CD8-positive, alpha-beta memory T cell (primary cell): ENCODE measurements at regions of chr2 and their contacts with region 1.

Region 1: GRCh38 chr2:156400706-156401678 is 35.2 kb upstream of the GPD2 start:
- DNase-seq: peak; percentile 64 to 87 (median 83)
- H3K4me3 ChIP-seq: peak overlapping the region; percentile 84
- H3K4me3 Mint-ChIP-seq: peak overlapping the region; percentile 85 to 99 (median 93)
- H3K27ac ChIP-seq: peak overlapping the region; percentile 89
- H3K27ac Mint-ChIP-seq: peak overlapping the region; percentile 92 to 99 (median 97)
- H3K4me1 ChIP-seq: peaks cover 6% of the 10 kb centered on the region
- H3K4me1 Mint-ChIP-seq: peaks cover 19 to 31% (median 31%) of the 10 kb centered on the region in 3 donors
- H3K27me3 ChIP-seq: no peaks in the 10 kb centered on the region
- H3K27me3 Mint-ChIP-seq: peaks cover 0 to 14% of the 10 kb centered on the region in 2 donors

Region 2: GRCh38 chr2:156332534-156333273 is 68.3 kb before region 1 on chr2 and contains the start of gene NR4A2:
- CTCF ChIA-PET with region 1: interaction called, 27 read pairs
- POLR2A ChIA-PET with region 1: interaction called, 32 read pairs
- DNase-seq: peak; percentile 86 to 96 (median 93)
- H3K4me3 ChIP-seq: peak within 1 kb of the TSS; percentile 99
- H3K4me3 Mint-ChIP-seq: peak within 1 kb of the TSS; percentile 94 to 99 (median 97)
- H3K27ac ChIP-seq: peak within 1 kb of the TSS; percentile 94
- H3K27ac Mint-ChIP-seq: peak within 1 kb of the TSS; percentile 98 to 100 (median 99)
- H3K4me1 ChIP-seq: peaks cover 22% of the 10 kb centered on the region
- H3K4me1 Mint-ChIP-seq: peaks cover 25 to 65% (median 36%) of the 10 kb centered on the region in 3 donors
- H3K27me3 ChIP-seq: no peaks in the 10 kb centered on the region
- H3K27me3 Mint-ChIP-seq: peaks cover 4 to 46% of the 10 kb centered on the region in 2 donors
- total RNA-seq, gene NR4A2: 19.7 to 21.9 TPM

Region 3: DNA sequence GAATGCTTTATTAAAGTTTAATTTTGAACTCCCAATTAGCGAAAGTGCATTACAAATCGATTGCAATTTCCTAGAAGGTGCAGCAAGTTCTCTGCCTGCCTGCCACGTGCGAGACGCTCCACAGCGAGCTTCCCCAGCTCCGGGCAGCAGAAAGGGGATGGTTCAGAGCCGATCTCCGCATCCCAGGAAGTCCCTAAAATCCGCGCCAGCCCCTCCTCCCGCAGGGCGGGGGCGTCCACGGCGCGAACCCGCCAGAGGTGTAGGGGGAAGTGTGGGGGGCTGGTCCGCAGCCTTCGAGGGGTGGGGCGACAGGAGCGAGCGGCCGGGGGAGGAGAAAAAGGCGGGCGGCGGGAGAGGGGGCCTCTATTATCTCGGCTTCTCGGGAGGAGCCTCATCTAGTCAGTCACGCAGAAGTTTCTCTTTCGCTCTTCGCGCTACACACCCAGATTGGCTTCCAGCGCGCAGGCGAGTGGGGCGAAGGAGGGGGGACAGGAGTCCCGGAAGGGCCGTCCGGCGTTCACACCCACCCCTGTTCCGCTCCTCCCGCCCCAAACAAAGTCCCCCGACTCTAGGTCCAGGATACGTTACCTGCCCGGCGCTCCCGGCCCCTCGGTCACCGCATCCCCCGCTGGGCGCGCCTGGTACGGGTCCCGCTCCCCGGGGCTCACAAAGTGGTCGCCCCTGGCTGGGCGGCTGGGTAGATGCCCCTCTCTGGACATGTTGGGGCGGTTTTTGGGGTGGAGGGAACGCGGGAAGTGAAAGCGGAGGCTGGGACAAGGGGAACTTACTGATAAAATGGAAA is 59.3 kb before region 1 on chr2:
- CTCF ChIA-PET with region 1: interaction called, 27 read pairs
- POLR2A ChIA-PET with region 1: interaction called, 49 read pairs
- DNase-seq: peak; percentile 84 to 93 (median 87)
- H3K4me3 ChIP-seq: peak overlapping the region; percentile 86
- H3K4me3 Mint-ChIP-seq: peak overlapping the region; percentile 92 to 97 (median 94)
- H3K27ac ChIP-seq: peak overlapping the region; percentile 99
- H3K27ac Mint-ChIP-seq: peak overlapping the region; percentile 95 to 100 (median 99)
- H3K4me1 ChIP-seq: peaks cover 23% of the 10 kb centered on the region
- H3K4me1 Mint-ChIP-seq: peaks cover 31 to 55% (median 45%) of the 10 kb centered on the region in 3 donors
- H3K27me3 ChIP-seq: no peaks in the 10 kb centered on the region
- H3K27me3 Mint-ChIP-seq: peaks cover 0 to 5% of the 10 kb centered on the region in 2 donors

Region 4: GRCh38 chr2:156411835-156412234 is 10.8 kb after region 1 on chr2:
- CTCF ChIA-PET with region 1: no interaction called
- POLR2A ChIA-PET with region 1: no interaction called
- DNase-seq: no peak
- H3K4me3 ChIP-seq: no peak overlapping the region
- H3K4me3 Mint-ChIP-seq: no peak overlapping the region
- H3K27ac ChIP-seq: no peak overlapping the region
- H3K27ac Mint-ChIP-seq: no peak overlapping the region
- H3K4me1 ChIP-seq: no peaks in the 10 kb centered on the region
- H3K4me1 Mint-ChIP-seq: no peaks in the 10 kb centered on the region
- H3K27me3 ChIP-seq: peaks cover 6% of the 10 kb centered on the region
- H3K27me3 Mint-ChIP-seq: peaks cover 10 to 12% of the 10 kb centered on the region in 2 donors

Region 5: GRCh38 chr2:156435715-156436496 is 34.9 kb after region 1 on chr2 and contains the start of gene GPD2:
- CTCF ChIA-PET with region 1: interaction called, 15 read pairs
- POLR2A ChIA-PET with region 1: interaction called, 3 read pairs
- DNase-seq: peak; percentile 51 to 80 (median 65)
- H3K4me3 ChIP-seq: peak within 1 kb of the TSS; percentile 82
- H3K4me3 Mint-ChIP-seq: peak within 1 kb of the TSS; percentile 91 to 98 (median 95)
- H3K27ac ChIP-seq: peak within 1 kb of the TSS; percentile 62
- H3K27ac Mint-ChIP-seq: peak within 1 kb of the TSS; percentile 88 to 98 (median 96)
- H3K4me1 ChIP-seq: peaks cover 21% of the 10 kb centered on the region
- H3K4me1 Mint-ChIP-seq: peaks cover 30 to 45% (median 40%) of the 10 kb centered on the region in 3 donors
- H3K27me3 ChIP-seq: no peaks in the 10 kb centered on the region
- H3K27me3 Mint-ChIP-seq: no peaks in the 10 kb centered on the region
- total RNA-seq, gene GPD2: 38.9 to 44.3 TPM

Region 6: GRCh38 chr2:156489195-156489594 is 88.2 kb after region 1 on chr2:
- CTCF ChIA-PET with region 1: no interaction called
- POLR2A ChIA-PET with region 1: no interaction called
- DNase-seq: no peak
- H3K4me3 ChIP-seq: no peak overlapping the region
- H3K4me3 Mint-ChIP-seq: peak overlapping the region in 2 of 7 donors; percentile 24 to 34
- H3K27ac ChIP-seq: no peak overlapping the region
- H3K27ac Mint-ChIP-seq: peak overlapping the region in 3 of 8 donors; percentile 36 to 63 (median 37)
- H3K4me1 ChIP-seq: no peaks in the 10 kb centered on the region
- H3K4me1 Mint-ChIP-seq: peaks cover 32 to 60% (median 40%) of the 10 kb centered on the region in 3 donors
- H3K27me3 ChIP-seq: no peaks in the 10 kb centered on the region
- H3K27me3 Mint-ChIP-seq: no peaks in the 10 kb centered on the region